ENCODE measurements at regions of chr1 and their contacts with region 1.

Region 1: DNA sequence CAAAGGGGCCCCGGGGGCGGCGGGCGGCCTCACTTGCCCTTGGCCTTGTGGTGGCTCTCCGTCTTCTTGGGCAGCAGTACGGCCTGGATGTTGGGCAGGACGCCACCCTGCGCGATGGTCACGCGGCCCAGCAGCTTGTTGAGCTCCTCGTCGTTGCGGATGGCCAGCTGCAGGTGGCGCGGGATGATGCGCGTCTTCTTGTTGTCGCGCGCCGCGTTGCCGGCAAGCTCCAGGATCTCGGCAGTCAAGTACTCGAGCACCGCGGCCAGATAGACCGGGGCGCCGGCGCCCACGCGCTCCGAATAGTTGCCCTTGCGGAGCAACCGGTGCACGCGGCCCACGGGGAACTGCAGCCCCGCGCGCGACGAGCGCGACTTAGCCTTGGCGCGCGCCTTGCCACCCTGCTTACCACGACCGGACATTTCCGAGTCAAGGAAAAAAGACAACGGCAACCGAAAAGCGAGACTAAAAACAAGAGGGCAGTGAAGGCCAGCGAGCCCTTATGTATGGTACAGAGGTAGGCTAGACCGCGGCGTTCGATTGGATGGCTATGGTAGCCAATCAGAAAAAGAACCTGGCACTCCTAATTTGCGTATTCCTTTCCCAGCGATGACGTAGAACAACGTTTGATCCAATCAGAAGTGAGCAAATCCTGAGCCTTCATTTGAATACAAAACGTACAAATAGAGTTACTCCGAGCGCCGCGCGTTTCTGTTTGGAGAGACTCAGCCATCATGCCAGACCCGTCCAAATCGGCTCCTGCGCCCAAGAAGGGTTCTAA is 29.6 kb upstream of the RNF187 start:
- DNase-seq: peak; percentile 93
- H3K4me3 ChIP-seq: peak overlapping the region; percentile 44
- H3K27ac ChIP-seq: peak overlapping the region; percentile 83
- H3K4me1 ChIP-seq: no peaks in the 10 kb centered on the region
- H3K27me3 ChIP-seq: peaks cover 4% of the 10 kb centered on the region
- CTCF ChIP-seq: peak; percentile 22

Region 2: DNA sequence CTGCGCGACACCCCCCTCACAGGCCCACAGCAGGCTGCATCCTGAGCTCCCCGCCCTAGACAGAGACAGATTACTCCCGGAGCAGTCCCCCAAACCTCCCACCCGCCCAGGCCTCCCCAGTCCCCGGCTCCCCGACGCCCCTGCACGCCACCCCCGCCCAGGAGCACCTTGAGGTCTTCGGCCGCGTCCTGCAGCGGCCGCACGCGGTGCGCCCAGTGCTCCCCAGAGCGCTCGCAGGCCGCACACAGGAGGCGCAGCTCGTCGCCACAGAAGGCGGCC is 51.7 kb before region 1 on chr1:
- intact Hi-C with region 1: loop called (anchors 5 kb)
- DNase-seq: no peak
- H3K4me3 ChIP-seq: peak overlapping the region; percentile 69
- H3K27ac ChIP-seq: peak overlapping the region; percentile 93
- H3K4me1 ChIP-seq: peaks cover 15% of the 10 kb centered on the region
- H3K27me3 ChIP-seq: no peaks in the 10 kb centered on the region
- CTCF ChIP-seq: no peak

Region 3: DNA sequence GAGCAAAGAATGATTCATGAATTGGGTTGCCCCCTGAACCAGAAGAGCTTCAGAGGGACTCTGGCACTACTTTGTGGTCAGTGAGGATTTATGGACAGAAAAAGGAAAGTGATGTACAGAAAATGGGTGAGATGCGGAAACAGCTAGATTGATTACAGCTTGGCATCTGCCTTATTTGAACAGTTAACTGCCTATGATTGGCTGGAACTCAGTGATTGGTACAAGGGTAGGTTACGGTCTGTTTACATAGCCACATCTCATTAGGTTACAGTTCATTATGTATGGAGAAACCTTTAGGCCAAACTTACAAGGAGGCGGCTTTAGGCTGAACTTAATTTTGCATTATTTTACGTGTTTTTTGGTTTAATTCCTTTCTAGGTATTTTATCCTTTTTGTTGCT is 248.7 kb after region 1 on chr1:
- intact Hi-C with region 1: no loop called
- DNase-seq: no peak
- H3K4me3 ChIP-seq: no peak overlapping the region
- H3K27ac ChIP-seq: no peak overlapping the region
- H3K4me1 ChIP-seq: no peaks in the 10 kb centered on the region
- H3K27me3 ChIP-seq: no peaks in the 10 kb centered on the region
- CTCF ChIP-seq: no peak

Measured in colonic mucosa (tissue), 4 donors.